ENCODE measurements at regions of chr3 and their contacts with region 1.

Region 1: GRCh38 chr3:150546226-150547044 is at the starts of genes EIF2A and SERP1:
- DNase-seq: peak; percentile 97 to 98
- ATAC-seq: peak; percentile 93
- H3K4me3 ChIP-seq: peak within 1 kb of the TSS; percentile 79 to 98 (median 94)
- H3K27ac ChIP-seq: peak within 1 kb of the TSS; percentile 94 to 100 (median 98)
- H3K4me1 ChIP-seq: peaks cover 32 to 38% of the 10 kb centered on the region in 2 donors
- H3K27me3 ChIP-seq: no peaks in the 10 kb centered on the region
- CTCF ChIP-seq: peak in 1 of 5 experiments; percentile 5
- POLR2A ChIP-seq: peak; percentile 95 to 96
- total RNA-seq, gene EIF2A: 150 to 168 (median 163) TPM
- total RNA-seq, gene SERP1: 25.3 to 52.7 (median 36.3) TPM

Region 2: GRCh38 chr3:149812606-149813366 is 733.6 kb before region 1 on chr3 and contains the start of gene RNF13:
- in situ Hi-C with region 1: no loop called
- intact Hi-C with region 1: loop called (anchors 2 kb)
- DNase-seq: peak; percentile 98 to 99
- ATAC-seq: peak; percentile 91 to 96
- H3K4me3 ChIP-seq: peak within 1 kb of the TSS; percentile 72 to 90 (median 82)
- H3K27ac ChIP-seq: peak within 1 kb of the TSS; percentile 91 to 98 (median 96)
- H3K4me1 ChIP-seq: peaks cover 41 to 48% of the 10 kb centered on the region in 2 donors
- H3K27me3 ChIP-seq: no peaks in the 10 kb centered on the region
- CTCF ChIP-seq: no peak
- POLR2A ChIP-seq: peak; percentile 75 to 89
- total RNA-seq, gene RNF13: 48.3 to 63.6 (median 56.9) TPM

Region 3: DNA sequence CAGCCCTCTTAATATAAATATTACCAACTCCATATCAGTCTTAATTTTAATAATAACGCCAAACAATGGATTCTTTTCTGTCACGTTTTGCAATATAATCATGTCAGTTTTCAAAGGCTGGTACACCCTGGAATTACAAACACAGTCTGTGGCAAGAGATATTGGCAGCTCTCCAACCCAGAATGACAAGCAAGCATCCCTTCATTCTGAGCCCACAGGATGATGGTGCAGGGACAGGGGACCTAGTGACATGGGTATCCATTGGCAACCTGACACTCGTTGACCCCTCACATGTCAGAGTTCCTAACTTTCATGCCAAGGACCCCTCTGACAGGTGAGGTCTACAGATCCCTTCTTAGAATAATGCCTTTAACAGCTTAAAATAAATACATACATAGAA is 292.8 kb before region 1 on chr3:
- in situ Hi-C with region 1: no loop called
- intact Hi-C with region 1: loop called (anchors 1 kb)
- DNase-seq: peak; percentile 24 to 66
- ATAC-seq: peak; percentile 45 to 46
- H3K4me3 ChIP-seq: no peak overlapping the region
- H3K27ac ChIP-seq: peak overlapping the region in 3 of 4 donors; percentile 78 to 89 (median 87)
- H3K4me1 ChIP-seq: peaks cover 21 to 52% of the 10 kb centered on the region in 2 donors
- H3K27me3 ChIP-seq: no peaks in the 10 kb centered on the region
- CTCF ChIP-seq: no peak
- POLR2A ChIP-seq: no peak

Region 4: GRCh38 chr3:150469031-150469942 is 77.1 kb before region 1 on chr3:
- in situ Hi-C with region 1: no loop called
- intact Hi-C with region 1: no loop called
- DNase-seq: peak; percentile 54 to 80
- ATAC-seq: peak; percentile 99 to 100
- H3K4me3 ChIP-seq: no peak overlapping the region
- H3K27ac ChIP-seq: peak overlapping the region; percentile 48 to 75 (median 58)
- H3K4me1 ChIP-seq: peaks cover 9 to 10% of the 10 kb centered on the region in 2 donors
- H3K27me3 ChIP-seq: no peaks in the 10 kb centered on the region
- CTCF ChIP-seq: no peak
- POLR2A ChIP-seq: no peak

Region 5: GRCh38 chr3:150603153-150603979 is 56.9 kb after region 1 on chr3 and contains the start of gene SELENOT:
- in situ Hi-C with region 1: loop called in 2 of 4 experiments (anchors 5 to 10 kb)
- intact Hi-C with region 1: loop called (anchors 1 kb)
- DNase-seq: peak; percentile 88 to 95
- ATAC-seq: peak; percentile 94 to 96
- H3K4me3 ChIP-seq: peak within 1 kb of the TSS; percentile 75 to 95 (median 86)
- H3K27ac ChIP-seq: peak within 1 kb of the TSS; percentile 93 to 98 (median 96)
- H3K4me1 ChIP-seq: peaks cover 41 to 50% of the 10 kb centered on the region in 2 donors
- H3K27me3 ChIP-seq: no peaks in the 10 kb centered on the region
- CTCF ChIP-seq: peak; percentile 27 to 58 (median 49)
- POLR2A ChIP-seq: peak; percentile 93
- total RNA-seq, gene SELENOT: 69.6 to 83.1 (median 76.2) TPM

Region 6: GRCh38 chr3:150703299-150704134 is 157.1 kb after region 1 on chr3 and contains the start of gene ERICH6:
- in situ Hi-C with region 1: no loop called
- intact Hi-C with region 1: loop called (anchors 5 kb)
- DNase-seq: peak; percentile 59 to 77
- ATAC-seq: peak; percentile 94 to 97
- H3K4me3 ChIP-seq: peak within 1 kb of the TSS; percentile 54 to 73 (median 66)
- H3K27ac ChIP-seq: peak within 1 kb of the TSS; percentile 23 to 64 (median 60)
- H3K4me1 ChIP-seq: peaks cover 0 to 12% of the 10 kb centered on the region in 2 donors
- H3K27me3 ChIP-seq: no peaks in the 10 kb centered on the region
- CTCF ChIP-seq: peak in 2 of 5 experiments; percentile 14 to 21
- POLR2A ChIP-seq: no peak
- total RNA-seq, gene ERICH6: not detected

Region 7: DNA sequence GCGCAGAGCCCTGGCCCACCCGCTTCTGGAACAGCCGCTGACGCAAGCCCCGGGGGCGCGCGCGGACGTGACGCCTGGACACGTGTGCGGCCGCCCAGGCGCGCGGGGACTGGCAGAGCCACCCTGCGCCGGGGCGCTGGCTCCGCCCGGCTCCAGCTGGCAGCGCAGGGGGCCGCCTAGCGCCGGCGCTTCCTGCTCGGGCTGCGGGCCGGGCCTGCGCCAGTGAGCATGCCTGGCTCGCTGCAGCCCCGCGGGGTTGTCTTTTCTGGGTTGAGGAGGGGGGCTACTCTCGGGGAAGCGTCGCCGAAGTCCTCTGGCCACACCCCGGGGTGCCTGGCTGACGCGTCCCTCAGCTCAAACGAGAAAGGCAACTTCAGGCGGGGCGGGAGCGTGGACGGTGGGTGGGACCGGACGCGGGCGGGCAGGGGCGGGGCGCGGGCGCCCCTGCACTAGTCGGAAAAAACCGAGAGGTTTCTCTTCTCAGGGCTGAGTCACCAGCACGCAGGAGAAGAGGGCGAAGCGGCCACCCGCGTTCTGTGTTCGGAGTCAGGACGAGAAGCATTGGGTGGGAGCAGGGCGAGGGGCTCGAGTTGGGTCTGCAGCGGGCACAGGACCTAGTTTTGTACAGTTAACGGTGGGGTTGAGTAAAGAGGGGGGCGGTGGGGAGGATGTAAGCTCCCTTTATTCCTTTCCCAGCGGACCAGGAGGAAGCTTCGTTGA is 216.8 kb after region 1 on chr3 and contains the start of gene SIAH2:
- in situ Hi-C with region 1: no loop called
- intact Hi-C with region 1: loop called (anchors 2 kb)
- DNase-seq: peak; percentile 85 to 88
- ATAC-seq: peak; percentile 79 to 84
- H3K4me3 ChIP-seq: peak within 1 kb of the TSS; percentile 61 to 80 (median 65)
- H3K27ac ChIP-seq: peak within 1 kb of the TSS; percentile 92 to 99 (median 96)
- H3K4me1 ChIP-seq: peaks cover 28 to 33% of the 10 kb centered on the region in 2 donors
- H3K27me3 ChIP-seq: no peaks in the 10 kb centered on the region
- CTCF ChIP-seq: peak in 1 of 5 experiments; percentile 21
- POLR2A ChIP-seq: peak; percentile 87 to 98
- total RNA-seq, gene SIAH2: 10.9 to 25.6 (median 20.0) TPM

Measured in gastrocnemius medialis (tissue), 4 donors.